CD8-positive, alpha-beta T cell (primary cell): ENCODE measurements at regions of chr7 and their contacts with region 1.

Region 1: DNA sequence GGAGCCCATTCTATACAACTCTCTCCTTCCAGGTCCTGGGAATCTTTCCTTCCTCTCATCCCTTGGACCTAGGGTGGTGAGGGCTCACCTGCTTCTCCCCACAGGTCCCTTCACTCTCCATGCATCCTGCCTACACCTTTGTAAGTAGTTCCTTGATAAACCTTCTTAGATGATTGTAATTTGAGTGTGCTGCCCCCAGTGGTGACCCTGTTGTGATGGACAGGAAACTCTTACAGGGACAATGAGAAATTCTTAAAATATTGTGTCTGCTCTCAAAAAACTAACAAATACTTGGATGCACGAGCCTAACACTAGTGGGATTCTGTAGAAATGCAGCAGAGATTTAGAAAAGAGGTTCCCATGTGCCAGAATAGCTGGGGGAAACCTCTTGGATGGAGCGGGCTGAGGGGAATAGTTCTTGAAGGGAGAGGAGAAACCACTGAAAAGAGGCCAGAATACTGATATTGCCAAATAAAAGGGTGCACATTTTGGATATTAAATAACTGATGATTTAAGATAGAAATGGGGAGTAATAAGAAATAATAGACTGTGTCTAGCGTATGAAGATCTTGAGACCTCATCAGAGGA is 6.7 kb upstream of the PAXIP1 start:
- DNase-seq: peak in 5 of 9 experiments; percentile 30 to 49 (median 36)
- ATAC-seq: peak; percentile 61
- H3K4me3 ChIP-seq: no peak overlapping the region
- H3K4me3 Mint-ChIP-seq: no peak overlapping the region
- H3K27ac ChIP-seq: no peak overlapping the region
- H3K27ac Mint-ChIP-seq: no peak overlapping the region
- H3K4me1 ChIP-seq: peaks cover 3% of the 10 kb centered on the region
- H3K4me1 Mint-ChIP-seq: peaks cover 10% of the 10 kb centered on the region
- H3K27me3 ChIP-seq: no peaks in the 10 kb centered on the region
- H3K27me3 Mint-ChIP-seq: no peaks in the 10 kb centered on the region
- CTCF ChIP-seq: peak; percentile 45

Region 2: DNA sequence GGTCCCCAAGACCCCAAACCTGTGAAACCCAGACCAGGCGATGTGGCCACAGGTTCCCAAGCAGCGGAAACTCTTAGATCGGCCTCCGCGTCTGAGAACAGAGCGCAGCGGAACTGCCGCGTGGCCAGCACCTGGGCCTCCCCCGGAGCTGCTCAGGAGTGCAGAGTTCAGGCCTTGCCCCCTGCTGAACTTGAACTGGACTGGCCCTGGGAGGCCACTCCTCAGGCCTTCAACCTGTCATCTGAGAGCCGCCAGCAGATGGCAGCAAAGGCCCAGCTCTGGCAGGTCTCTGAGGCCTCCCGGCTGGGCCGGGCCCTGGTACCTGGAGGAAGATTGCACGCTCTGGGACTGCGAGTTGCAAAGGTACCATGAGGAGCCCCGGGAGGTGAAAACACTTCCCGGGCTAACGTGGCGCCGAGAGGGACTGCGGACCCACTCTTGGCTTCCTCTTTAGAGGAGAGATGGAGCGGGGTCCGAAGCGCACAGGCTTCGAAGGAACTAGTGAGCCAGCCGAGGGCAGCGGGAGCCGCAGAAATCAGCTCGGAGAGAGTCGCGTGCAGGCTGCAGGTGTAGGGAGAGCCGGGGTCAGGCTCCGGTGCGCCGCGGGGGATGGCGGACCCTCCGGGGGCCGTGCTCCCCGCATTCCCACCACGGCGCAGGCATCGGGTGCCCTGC is 95.9 kb before region 1 on chr7:
- CTCF ChIA-PET with region 1: interaction called, 13 read pairs
- POLR2A ChIA-PET with region 1: no interaction called
- intact Hi-C with region 1: loop called (anchors 1 to 5 kb)
- DNase-seq: peak; percentile 77 to 93 (median 86)
- ATAC-seq: peak; percentile 95
- H3K4me3 ChIP-seq: peak overlapping the region; percentile 34 to 37
- H3K4me3 Mint-ChIP-seq: peak overlapping the region; percentile 86
- H3K27ac ChIP-seq: no peak overlapping the region
- H3K27ac Mint-ChIP-seq: no peak overlapping the region
- H3K4me1 ChIP-seq: no peaks in the 10 kb centered on the region
- H3K4me1 Mint-ChIP-seq: peaks cover 3% of the 10 kb centered on the region
- H3K27me3 ChIP-seq: no peaks in the 10 kb centered on the region
- H3K27me3 Mint-ChIP-seq: peaks cover 29% of the 10 kb centered on the region
- CTCF ChIP-seq: peak; percentile 91

Region 3: DNA sequence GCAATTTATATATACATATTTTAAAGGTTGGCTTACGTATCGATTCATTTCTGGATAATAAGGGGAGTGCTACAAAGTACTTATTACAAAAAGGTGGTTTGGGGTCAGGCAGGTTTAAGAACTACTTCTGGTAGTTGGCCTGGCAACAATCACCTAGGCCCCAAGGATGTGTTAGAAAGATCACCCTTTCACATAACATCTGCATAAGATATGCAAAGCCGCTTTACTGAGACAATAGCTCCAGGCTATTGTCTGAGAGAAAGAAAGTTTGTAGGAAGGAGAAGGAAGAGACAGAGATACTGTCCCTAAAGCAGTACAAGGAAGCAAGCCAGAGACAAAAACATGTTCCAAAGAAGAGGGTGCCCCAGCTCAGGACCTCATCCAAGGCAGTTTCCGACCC is 12.9 kb before region 1 on chr7:
- CTCF ChIA-PET with region 1: interaction called, 10 read pairs
- POLR2A ChIA-PET with region 1: interaction called, 3 read pairs
- intact Hi-C with region 1: no loop called
- DNase-seq: no peak
- ATAC-seq: no peak
- H3K4me3 ChIP-seq: no peak overlapping the region
- H3K4me3 Mint-ChIP-seq: no peak overlapping the region
- H3K27ac ChIP-seq: no peak overlapping the region
- H3K27ac Mint-ChIP-seq: no peak overlapping the region
- H3K4me1 ChIP-seq: peaks cover 4% of the 10 kb centered on the region
- H3K4me1 Mint-ChIP-seq: peaks cover 6% of the 10 kb centered on the region
- H3K27me3 ChIP-seq: no peaks in the 10 kb centered on the region
- H3K27me3 Mint-ChIP-seq: no peaks in the 10 kb centered on the region
- CTCF ChIP-seq: no peak